Vagina (tissue), 2 donors: ENCODE measurements at regions of chr20 and their contacts with region 1.

Region 1: GRCh38 chr20:52104546-52105441 is 86.8 kb downstream of the ZFP64 start:
- DNase-seq: no peak
- H3K4me3 ChIP-seq: peak overlapping the region; percentile 31 to 43
- H3K27ac ChIP-seq: no peak overlapping the region
- H3K4me1 ChIP-seq: peaks cover 26% of the 10 kb centered on the region
- H3K27me3 ChIP-seq: peaks cover 6% of the 10 kb centered on the region
- CTCF ChIP-seq: no peak
- POLR2A ChIP-seq: no peak

Region 2: DNA sequence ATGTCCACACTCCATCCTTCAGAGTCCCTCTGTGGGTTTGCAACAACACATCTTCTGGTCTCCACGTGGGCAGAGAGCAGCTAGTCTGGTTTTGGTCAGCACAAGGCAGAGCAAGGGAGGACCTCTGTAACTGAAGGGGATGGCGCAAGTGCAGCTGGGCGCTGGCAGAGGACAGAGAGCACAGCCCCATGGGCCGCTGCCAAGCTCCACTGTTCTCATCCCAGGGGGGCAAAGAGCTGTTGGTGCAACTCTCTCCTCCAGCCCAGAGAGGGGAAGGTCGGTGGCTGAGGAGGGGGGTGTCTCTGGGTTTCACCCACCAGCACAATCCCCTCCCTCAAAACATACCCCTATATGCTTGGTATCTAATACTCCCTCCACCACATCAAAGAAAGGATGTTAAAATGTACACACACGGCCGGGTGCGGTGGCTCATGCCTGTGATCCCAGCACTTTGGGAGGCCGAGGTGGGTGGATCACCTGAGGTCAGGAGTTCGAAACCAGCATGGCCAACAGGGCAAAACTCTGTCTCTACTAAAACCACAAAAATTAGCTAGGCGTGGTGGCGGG is 345.7 kb before region 1 on chr20:
- intact Hi-C with region 1: loop called (anchors 5 kb)
- DNase-seq: no peak
- H3K4me3 ChIP-seq: no peak overlapping the region
- H3K27ac ChIP-seq: no peak overlapping the region
- H3K4me1 ChIP-seq: no peaks in the 10 kb centered on the region
- H3K27me3 ChIP-seq: no peaks in the 10 kb centered on the region
- CTCF ChIP-seq: no peak
- POLR2A ChIP-seq: no peak

Region 3: DNA sequence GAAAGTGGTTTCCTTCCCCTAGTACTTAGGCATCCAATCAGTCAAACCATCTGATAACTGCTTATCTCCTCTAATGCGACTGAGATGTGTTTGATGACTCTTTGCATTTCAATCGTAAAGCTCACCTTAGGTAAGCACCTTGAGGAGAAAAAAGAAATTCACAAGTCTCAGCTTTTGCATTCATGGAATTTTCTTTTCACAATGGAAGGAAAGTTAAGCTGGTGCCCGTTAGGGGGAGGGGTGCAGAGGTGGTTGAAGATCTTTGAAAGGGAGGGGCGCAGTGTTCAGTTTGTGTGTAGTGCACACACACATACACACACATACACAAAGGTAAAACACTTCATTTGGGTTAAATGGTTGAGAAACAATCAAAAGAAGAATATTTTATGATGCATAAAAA is 215.3 kb before region 1 on chr20:
- intact Hi-C with region 1: no loop called
- DNase-seq: no peak
- H3K4me3 ChIP-seq: no peak overlapping the region
- H3K27ac ChIP-seq: no peak overlapping the region
- H3K4me1 ChIP-seq: no peaks in the 10 kb centered on the region
- H3K27me3 ChIP-seq: no peaks in the 10 kb centered on the region
- CTCF ChIP-seq: no peak
- POLR2A ChIP-seq: no peak